IMR-90 (cell line): ENCODE measurements at regions of chr10 and their contacts with region 1.

Region 1: GRCh38 chr10:17737027-17737965 is 14.7 kb upstream of the TMEM236 start:
- DNase-seq: peak; percentile 55
- ATAC-seq: peak; percentile 62
- H3K4me3 ChIP-seq: no peak overlapping the region
- H3K27ac ChIP-seq: no peak overlapping the region
- H3K4me1 ChIP-seq: no peaks in the 10 kb centered on the region
- H3K27me3 ChIP-seq: no peaks in the 10 kb centered on the region
- CTCF ChIP-seq: peak; percentile 63
- POLR2A ChIP-seq: no peak
- RAD21 ChIP-seq: peak; percentile 42

Region 2: GRCh38 chr10:18238870-18239485 is 501.7 kb after region 1 on chr10:
- CTCF ChIA-PET with region 1: no interaction called
- POLR2A ChIA-PET with region 1: no interaction called
- dilution Hi-C with region 1: no loop called
- in situ Hi-C with region 1: no loop called
- intact Hi-C with region 1: loop called (anchors 5 kb)
- DNase-seq: peak; percentile 70
- ATAC-seq: peak; percentile 84
- H3K4me3 ChIP-seq: no peak overlapping the region
- H3K27ac ChIP-seq: no peak overlapping the region
- H3K4me1 ChIP-seq: peaks cover 2% of the 10 kb centered on the region; the same call in 1 of the 2 replicates
- H3K27me3 ChIP-seq: peaks cover 2% of the 10 kb centered on the region; the same call in 1 of the 2 replicates
- CTCF ChIP-seq: peak; percentile 77
- POLR2A ChIP-seq: no peak
- RAD21 ChIP-seq: peak; percentile 84